ENCODE measurements at regions of chr17 and their contacts with region 1.

Region 1: DNA sequence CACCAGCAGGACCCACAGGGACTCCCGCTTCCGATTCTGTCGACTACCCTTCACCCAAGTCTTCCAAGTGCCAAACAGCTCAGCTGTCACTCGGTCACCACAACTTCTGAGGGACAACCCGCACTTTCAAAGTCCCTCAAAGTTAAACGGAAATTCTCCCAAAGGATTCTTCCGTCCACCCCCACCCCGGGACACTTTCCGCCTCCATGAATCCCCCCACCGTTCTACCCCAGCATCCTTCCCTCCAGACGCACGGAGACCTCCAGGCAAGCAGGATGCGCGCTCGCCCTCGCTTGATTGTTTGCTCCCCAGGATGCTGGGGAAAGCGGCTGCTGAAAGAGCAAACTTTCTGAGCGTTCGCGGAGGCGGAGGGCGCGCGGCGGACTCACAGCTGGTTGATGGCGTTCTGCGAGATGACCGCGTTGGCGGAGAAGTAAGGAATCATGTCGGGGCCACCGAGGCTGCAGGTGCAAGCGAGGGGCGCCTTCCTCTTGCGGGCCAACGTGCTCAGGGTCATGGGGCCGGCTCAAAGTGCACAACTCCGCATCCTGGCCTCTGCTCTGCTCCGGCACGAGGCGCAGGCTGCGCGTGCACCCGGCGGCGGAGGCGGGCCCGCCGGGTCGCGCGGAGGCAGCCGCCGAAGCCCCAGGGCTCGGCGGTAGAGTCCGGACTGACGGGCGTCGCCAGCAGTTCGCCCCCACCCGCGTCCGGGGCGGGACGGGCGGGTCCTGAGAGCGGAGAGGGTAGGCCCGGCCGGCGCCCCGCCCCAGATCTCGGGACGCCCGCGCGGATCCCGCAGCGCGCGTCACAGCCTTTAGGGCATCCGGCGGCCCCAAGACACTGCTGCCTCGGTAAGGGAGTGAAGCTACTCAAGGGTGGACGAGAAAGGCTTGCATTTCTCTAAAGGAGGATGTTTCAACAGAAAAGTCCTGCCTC is 138.3 kb upstream of the CORO6 start:
- DNase-seq: peak; percentile 93

Region 2: GRCh38 chr17:29664743-29665480 is 96.1 kb before region 1 on chr17:
- in situ Hi-C with region 1: loop called (anchors 25 kb)
- DNase-seq: no peak

Region 3: DNA sequence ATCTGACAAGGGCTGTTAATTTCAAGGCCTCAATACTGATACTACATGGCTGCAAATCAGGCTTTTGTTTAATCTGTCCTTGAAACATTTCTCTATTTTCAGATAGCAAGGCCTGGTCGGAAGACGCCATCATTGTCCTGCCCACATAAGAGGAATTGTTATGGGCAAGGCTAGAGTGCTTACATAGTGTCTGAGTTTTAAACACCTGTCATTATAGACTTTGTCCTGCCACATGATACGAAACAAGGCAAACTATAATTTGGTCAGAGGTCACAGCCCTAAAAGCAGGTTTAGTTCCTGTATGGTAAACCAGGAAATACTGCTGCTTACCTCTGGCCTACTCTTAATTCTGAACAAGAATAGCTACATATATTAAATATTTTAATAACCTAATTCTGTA is 64.6 kb after region 1 on chr17:
- in situ Hi-C with region 1: no loop called
- DNase-seq: no peak

Region 4: DNA sequence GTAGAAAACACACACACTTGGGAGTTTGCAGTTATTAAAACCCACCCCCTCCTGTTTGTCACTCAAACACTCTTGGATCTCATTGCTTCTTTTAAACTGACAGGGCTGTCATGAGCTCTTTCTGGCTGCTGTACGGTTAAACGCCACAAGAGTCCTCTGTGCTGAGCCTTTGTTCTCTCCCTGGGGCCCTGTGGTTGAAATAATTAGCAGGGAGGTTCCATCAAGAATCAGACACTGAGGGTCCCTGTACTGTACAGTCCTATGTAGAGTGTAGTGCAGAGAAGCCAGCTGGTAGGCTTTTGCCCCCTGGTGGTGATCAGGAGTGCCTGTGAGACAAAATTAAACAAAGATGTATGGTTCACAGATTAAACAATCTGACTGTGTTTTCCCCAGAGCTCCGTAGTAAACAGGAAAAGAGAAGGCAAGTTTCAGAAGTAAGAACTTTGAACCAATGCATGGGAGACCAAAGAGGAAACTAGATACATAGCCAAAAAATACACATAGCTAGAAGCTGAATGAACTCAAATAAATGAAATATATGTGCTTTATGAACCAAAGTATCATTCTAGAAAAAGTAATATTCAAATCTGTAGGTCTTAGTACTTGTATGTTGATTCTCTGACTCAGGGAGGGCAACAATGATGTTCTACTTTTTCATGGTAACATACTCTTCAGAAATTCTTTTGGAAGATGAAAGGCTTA is 170.4 kb after region 1 on chr17:
- in situ Hi-C with region 1: no loop called
- DNase-seq: peak; percentile 85